HEK293T (cell line): ENCODE measurements at regions of chr20 and their contacts with region 1.

Region 1: GRCh38 chr20:19205977-19206396 is 6.5 kb upstream of the SLC24A3 start:
- DNase-seq: peak; percentile 57

Region 2: GRCh38 chr20:19583532-19584175 is 377.7 kb after region 1 on chr20:
- CTCF ChIA-PET with region 1: interaction called, 12 read pairs
- POLR2A ChIA-PET with region 1: no interaction called
- DNase-seq: peak; percentile 73